ENCODE measurements at regions of chr11 and their contacts with region 1.

Region 1: DNA sequence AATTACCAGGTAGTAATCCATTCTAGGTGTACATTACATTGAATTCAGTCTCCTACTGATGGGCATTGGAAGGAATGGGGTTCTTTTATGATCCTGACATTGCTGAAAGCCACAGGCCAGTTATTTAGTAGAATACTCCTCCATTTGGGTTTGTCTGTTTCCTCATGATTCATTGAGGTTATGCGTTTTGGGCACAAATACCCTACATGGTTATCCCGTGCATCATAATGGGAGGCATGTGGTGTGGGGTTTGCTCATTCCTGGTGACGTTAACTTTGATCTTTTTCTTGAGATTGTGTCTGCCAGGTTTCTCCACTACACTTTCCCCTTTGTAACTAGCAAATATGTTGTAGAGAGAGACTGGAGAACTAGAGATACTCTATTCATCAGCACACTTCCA is 5.5 kb downstream of the FOLR3 start:
- H3K4me3 Mint-ChIP-seq: no peak overlapping the region
- H3K27ac Mint-ChIP-seq: no peak overlapping the region
- H3K4me1 Mint-ChIP-seq: peaks cover 55% of the 10 kb centered on the region
- H3K27me3 Mint-ChIP-seq: no peaks in the 10 kb centered on the region

Region 2: GRCh38 chr11:72024069-72024754 is 116.9 kb before region 1 on chr11:
- intact Hi-C with region 1: loop called (anchors 2 kb)
- H3K4me3 Mint-ChIP-seq: peak overlapping the region; percentile 2
- H3K27ac Mint-ChIP-seq: peak overlapping the region; percentile 37
- H3K4me1 Mint-ChIP-seq: peaks cover 32% of the 10 kb centered on the region
- H3K27me3 Mint-ChIP-seq: no peaks in the 10 kb centered on the region

Region 3: DNA sequence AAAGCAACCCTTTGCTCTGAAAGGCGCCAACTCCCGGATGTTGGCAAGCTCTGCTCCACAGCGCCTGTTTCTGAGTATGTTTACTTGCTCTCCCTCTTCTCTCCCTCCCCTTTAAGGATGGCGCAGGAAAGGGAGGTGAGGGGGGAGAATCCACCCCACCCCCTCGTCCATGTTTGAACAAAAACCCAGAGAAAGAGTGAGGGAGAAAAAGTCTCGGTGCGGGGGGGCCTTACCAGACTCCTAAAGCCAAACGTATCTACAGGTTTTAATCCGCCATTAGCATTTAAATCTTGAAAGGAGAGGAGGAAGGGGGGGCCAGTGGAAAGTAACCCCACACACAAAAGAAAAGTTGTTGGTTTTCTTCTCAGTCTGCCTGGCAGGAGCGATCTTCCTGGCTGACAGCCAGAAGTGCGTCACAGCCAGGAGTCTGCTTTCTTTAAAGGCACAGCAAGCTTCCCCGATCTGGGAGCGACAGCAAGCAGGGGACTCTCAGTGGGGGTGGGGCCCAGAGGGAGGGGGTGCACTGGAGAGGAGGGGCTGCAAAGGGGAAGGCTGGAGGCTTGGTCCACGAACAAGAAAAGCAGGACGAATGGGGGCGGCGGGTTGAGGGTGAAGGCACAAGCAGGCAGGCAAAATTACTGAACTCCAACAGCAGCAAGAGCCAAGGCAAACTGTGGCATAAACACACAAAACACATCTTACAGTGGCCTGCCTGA is 100.2 kb before region 1 on chr11:
- intact Hi-C with region 1: loop called (anchors 5 kb)
- H3K4me3 Mint-ChIP-seq: no peak overlapping the region
- H3K27ac Mint-ChIP-seq: no peak overlapping the region
- H3K4me1 Mint-ChIP-seq: peaks cover 8% of the 10 kb centered on the region
- H3K27me3 Mint-ChIP-seq: no peaks in the 10 kb centered on the region

Region 4: DNA sequence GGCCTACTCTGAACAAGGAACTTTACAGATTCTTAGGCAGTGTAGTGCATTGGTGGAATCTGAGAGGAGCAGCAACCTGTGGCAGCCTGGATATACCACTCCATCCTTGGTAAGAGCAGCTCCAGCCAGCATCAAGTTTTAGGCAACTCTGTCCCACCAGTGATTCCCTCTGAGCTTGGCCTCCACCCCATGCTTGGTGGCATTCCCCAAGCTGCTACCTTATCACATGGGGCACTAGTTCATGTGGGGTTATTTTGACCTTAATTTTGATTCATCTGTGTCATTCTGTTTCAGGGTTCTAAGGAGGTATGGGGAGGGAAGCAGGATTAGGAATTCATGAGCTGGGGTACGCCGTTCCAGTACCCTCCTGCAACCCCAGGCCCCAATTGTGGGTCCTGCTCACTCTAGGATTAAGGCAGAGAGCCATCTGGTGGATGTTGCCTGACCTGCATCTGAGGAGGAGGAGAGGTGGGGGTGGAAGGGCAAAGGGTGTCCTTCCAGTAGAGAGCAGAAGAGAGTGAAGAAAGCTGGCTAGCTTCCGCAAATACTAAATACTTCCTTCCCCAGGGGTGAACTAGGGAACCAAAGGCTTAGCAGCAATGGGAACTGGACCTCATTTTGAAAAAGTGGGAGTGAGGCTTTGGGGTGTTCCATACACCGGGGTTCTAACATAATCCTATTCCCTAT is 49.9 kb before region 1 on chr11:
- intact Hi-C with region 1: loop called (anchors 1 kb)
- H3K4me3 Mint-ChIP-seq: no peak overlapping the region
- H3K27ac Mint-ChIP-seq: peak overlapping the region; percentile 79
- H3K4me1 Mint-ChIP-seq: peaks cover 31% of the 10 kb centered on the region
- H3K27me3 Mint-ChIP-seq: no peaks in the 10 kb centered on the region

Region 5: GRCh38 chr11:72102946-72103753 is 37.9 kb before region 1 on chr11 and contains the start of gene LAMTOR1:
- intact Hi-C with region 1: loop called (anchors 2 kb)
- H3K4me3 Mint-ChIP-seq: peak within 1 kb of the TSS; percentile 96
- H3K27ac Mint-ChIP-seq: peak within 1 kb of the TSS; percentile 92
- H3K4me1 Mint-ChIP-seq: peaks cover 54% of the 10 kb centered on the region
- H3K27me3 Mint-ChIP-seq: no peaks in the 10 kb centered on the region